ENCODE measurements at regions of chrX and their contacts with region 1.

Region 1: GRCh38 chrX:115147220-115147619 is 42.0 kb upstream of the RBMXL3 start:
- DNase-seq: peak; percentile 25
- H3K4me3 Mint-ChIP-seq: no peak overlapping the region
- H3K27ac Mint-ChIP-seq: no peak overlapping the region
- H3K4me1 Mint-ChIP-seq: no peaks in the 10 kb centered on the region
- H3K27me3 Mint-ChIP-seq: peaks cover 49% of the 10 kb centered on the region
- CTCF ChIP-seq: peak; percentile 46

Region 2: GRCh38 chrX:114611018-114611619 is 536.1 kb before region 1 on chrX:
- CTCF ChIA-PET with region 1: interaction called, 3 read pairs
- POLR2A ChIA-PET with region 1: no interaction called
- intact Hi-C with region 1: loop called (anchors 1 kb)
- DNase-seq: peak; percentile 62
- H3K4me3 Mint-ChIP-seq: no peak overlapping the region
- H3K27ac Mint-ChIP-seq: no peak overlapping the region
- H3K4me1 Mint-ChIP-seq: no peaks in the 10 kb centered on the region
- H3K27me3 Mint-ChIP-seq: peaks cover 36% of the 10 kb centered on the region
- CTCF ChIP-seq: peak; percentile 62

Region 3: GRCh38 chrX:114626323-114626722 is 520.9 kb before region 1 on chrX:
- CTCF ChIA-PET with region 1: interaction called, 13 read pairs
- POLR2A ChIA-PET with region 1: no interaction called
- intact Hi-C with region 1: loop called (anchors 5 kb)
- DNase-seq: peak; percentile 41
- H3K4me3 Mint-ChIP-seq: no peak overlapping the region
- H3K27ac Mint-ChIP-seq: no peak overlapping the region
- H3K4me1 Mint-ChIP-seq: no peaks in the 10 kb centered on the region
- H3K27me3 Mint-ChIP-seq: peaks cover 52% of the 10 kb centered on the region
- CTCF ChIP-seq: peak; percentile 46

Region 4: DNA sequence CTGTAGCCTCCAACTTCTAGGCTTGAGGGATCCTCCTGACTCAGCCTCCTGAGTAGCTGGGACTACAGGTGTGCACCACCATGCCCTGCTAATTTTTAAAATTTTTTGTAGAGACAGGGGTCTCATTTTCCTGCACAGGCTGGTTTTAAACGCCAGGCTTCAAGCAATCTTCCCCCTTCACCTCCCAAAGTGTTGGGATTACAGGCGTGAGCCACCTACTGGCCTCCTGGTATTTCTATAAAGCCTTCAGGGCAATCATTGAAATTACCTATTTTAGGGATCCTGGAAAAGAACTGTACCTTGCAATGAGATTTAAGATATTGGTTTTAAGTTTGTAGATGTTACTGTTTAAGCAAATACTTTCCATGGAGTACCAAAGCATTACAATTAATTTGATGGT is 400.2 kb after region 1 on chrX:
- CTCF ChIA-PET with region 1: no interaction called
- POLR2A ChIA-PET with region 1: no interaction called
- intact Hi-C with region 1: no loop called
- DNase-seq: no peak
- H3K4me3 Mint-ChIP-seq: no peak overlapping the region
- H3K27ac Mint-ChIP-seq: no peak overlapping the region
- H3K4me1 Mint-ChIP-seq: no peaks in the 10 kb centered on the region
- H3K27me3 Mint-ChIP-seq: peaks cover 34% of the 10 kb centered on the region
- CTCF ChIP-seq: peak; percentile 9